ENCODE measurements at regions of chr1 and their contacts with region 1.

Region 1: DNA sequence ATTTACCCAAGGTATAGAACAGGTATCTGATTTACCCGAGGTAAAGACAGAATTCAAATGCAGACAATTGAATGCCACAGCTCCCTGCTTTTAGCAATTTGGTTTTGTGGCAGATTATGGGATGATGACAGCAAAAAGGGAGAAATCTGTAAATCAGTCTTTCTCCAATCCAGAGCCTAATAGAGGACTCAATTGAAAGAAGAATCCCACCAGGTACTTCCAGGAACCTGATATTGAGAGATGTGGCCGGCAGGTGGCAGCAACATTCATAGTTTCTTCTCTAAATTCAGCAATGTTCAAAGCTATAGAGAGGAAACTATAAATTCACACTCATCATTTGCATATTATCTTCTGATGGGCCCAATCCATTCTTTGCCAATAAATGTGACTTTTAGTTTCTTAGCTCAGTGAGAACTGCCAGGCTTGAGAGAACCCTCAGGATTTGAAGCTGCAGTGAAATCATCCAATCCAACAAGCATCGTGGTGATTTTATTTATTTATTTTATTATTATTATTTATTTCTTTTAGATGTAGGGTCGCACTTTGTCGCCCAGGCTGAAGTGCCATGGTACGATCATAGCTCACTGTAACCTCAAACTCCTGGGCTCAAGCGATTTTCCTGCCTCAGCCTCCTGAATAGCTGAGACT is 9.8 kb upstream of the PHACTR4 start:
- DNase-seq: peak; percentile 93
- H3K4me3 ChIP-seq: no peak overlapping the region
- H3K27ac ChIP-seq: no peak overlapping the region
- H3K4me1 ChIP-seq: no peaks in the 10 kb centered on the region
- H3K27me3 ChIP-seq: no peaks in the 10 kb centered on the region
- CTCF ChIP-seq: peak; percentile 57 to 70 (median 59)
- EP300 ChIP-seq: no peak
- POLR2A ChIP-seq: no peak

Region 2: GRCh38 chr1:27430903-27431600 is 928.7 kb before region 1 on chr1:
- intact Hi-C with region 1: no loop called
- DNase-seq: no peak
- H3K4me3 ChIP-seq: peak overlapping the region; percentile 3 to 14 (median 6)
- H3K27ac ChIP-seq: peak overlapping the region; percentile 79 to 86 (median 83)
- H3K4me1 ChIP-seq: peaks cover 88 to 99% (median 98%) of the 10 kb centered on the region in 4 donors
- H3K27me3 ChIP-seq: no peaks in the 10 kb centered on the region
- CTCF ChIP-seq: peak in 2 of 3 experiments; percentile 20 to 29
- EP300 ChIP-seq: peak; percentile 62
- POLR2A ChIP-seq: no peak

Region 3: GRCh38 chr1:28602536-28603439 is 243.1 kb after region 1 on chr1:
- intact Hi-C with region 1: loop called (anchors 10 kb)
- DNase-seq: no peak
- H3K4me3 ChIP-seq: no peak overlapping the region
- H3K27ac ChIP-seq: peak overlapping the region; percentile 3 to 32 (median 22)
- H3K4me1 ChIP-seq: peaks cover 0 to 15% (median 11%) of the 10 kb centered on the region in 4 donors
- H3K27me3 ChIP-seq: no peaks in the 10 kb centered on the region
- CTCF ChIP-seq: peak; percentile 66 to 80 (median 68)
- EP300 ChIP-seq: no peak
- POLR2A ChIP-seq: no peak

Measured in esophagus muscularis mucosa (tissue), 4 donors.